ENCODE measurements at regions of chr16 and their contacts with region 1.

Region 1: GRCh38 chr16:88743693-88744576 is 37.6 kb downstream of the CTU2 start:
- DNase-seq: peak; percentile 69 to 96 (median 86)
- ATAC-seq: peak; percentile 84 to 93 (median 86)
- H3K4me3 ChIP-seq: no peak overlapping the region
- H3K27ac ChIP-seq: no peak overlapping the region
- H3K4me1 ChIP-seq: peaks cover 0 to 3% (median 0%) of the 10 kb centered on the region in 3 donors
- H3K27me3 ChIP-seq: no peaks in the 10 kb centered on the region
- CTCF ChIP-seq: peak; percentile 84 to 94 (median 86)

Region 2: DNA sequence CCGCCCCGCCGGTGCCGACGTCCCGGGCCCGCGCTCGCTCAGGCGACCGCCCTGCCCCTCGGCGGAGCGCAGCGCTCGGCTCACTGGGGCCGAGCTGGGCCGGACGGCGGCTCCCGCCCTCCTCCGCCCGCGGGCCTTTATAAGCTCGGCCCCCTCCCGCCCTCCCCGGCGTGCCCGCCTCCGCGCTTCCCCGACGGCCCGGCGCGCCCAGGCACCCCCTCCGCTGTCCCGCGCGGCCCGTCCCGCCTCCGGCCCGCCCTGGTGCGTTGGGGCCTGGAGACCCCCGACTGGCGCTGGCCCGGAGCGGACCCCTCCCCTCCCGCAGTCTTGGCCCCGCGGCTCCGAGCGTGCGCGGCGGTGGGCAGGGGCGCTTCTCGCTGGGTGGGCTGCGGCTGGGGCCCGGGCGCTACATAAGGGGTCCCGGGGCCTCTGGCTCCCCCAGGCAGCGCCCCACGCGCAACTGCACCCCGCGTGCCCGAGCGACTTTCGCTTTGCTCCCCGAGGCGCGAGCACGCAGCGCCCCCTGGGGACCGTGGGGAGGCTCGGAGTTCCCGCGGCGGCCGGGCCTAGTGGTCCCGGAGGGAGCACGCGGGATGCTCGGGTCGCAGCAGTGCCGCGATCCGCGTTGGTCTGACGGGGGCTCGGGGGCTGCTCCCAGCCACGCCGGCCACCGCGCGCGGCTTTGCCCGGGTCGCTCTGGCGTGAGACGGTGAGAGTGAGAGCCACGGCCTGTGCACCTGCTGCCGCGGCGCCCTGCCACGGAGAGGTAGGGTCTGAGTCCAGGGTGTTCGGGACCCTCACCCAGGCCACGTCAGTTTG is 41.4 kb after region 1 on chr16 and contains the start of gene PIEZO1:
- intact Hi-C with region 1: loop called in 2 of 3 experiments (anchors 5 kb)
- DNase-seq: peak in 5 of 6 donors; percentile 58 to 91 (median 78)
- ATAC-seq: peak; percentile 51 to 72 (median 68)
- H3K4me3 ChIP-seq: peak within 1 kb of the TSS; percentile 54 to 89 (median 73)
- H3K27ac ChIP-seq: peak within 1 kb of the TSS; percentile 64 to 90 (median 72)
- H3K4me1 ChIP-seq: peaks cover 0 to 3% (median 0%) of the 10 kb centered on the region in 3 donors
- H3K27me3 ChIP-seq: no peaks in the 10 kb centered on the region
- CTCF ChIP-seq: peak; percentile 47 to 76 (median 69)
- total RNA-seq, gene PIEZO1: 16.3 to 72.0 (median 23.9) TPM

Region 3: GRCh38 chr16:89161763-89162713 is 418.1 kb after region 1 on chr16:
- intact Hi-C with region 1: loop called in 2 of 3 experiments (anchors 5 to 10 kb)
- DNase-seq: peak in 1 of 6 donors; percentile 58
- ATAC-seq: no peak
- H3K4me3 ChIP-seq: no peak overlapping the region
- H3K27ac ChIP-seq: no peak overlapping the region
- H3K4me1 ChIP-seq: no peaks in the 10 kb centered on the region
- H3K27me3 ChIP-seq: peaks cover 0 to 5% (median 0%) of the 10 kb centered on the region in 4 donors
- CTCF ChIP-seq: no peak